Esophagus squamous epithelium (tissue), 5 donors: ENCODE measurements at regions of chr5 and their contacts with region 1.

Region 1: GRCh38 chr5:135724617-135725016 is 109.8 kb upstream of the SLC25A48 start:
- DNase-seq: no peak
- H3K4me3 ChIP-seq: no peak overlapping the region
- H3K27ac ChIP-seq: no peak overlapping the region
- H3K4me1 ChIP-seq: peaks cover 0 to 18% (median 4%) of the 10 kb centered on the region in 3 donors
- H3K27me3 ChIP-seq: no peaks in the 10 kb centered on the region
- CTCF ChIP-seq: no peak
- POLR2A ChIP-seq: no peak

Region 2: GRCh38 chr5:135271533-135272310 is 452.9 kb before region 1 on chr5:
- intact Hi-C with region 1: no loop called
- DNase-seq: no peak
- H3K4me3 ChIP-seq: no peak overlapping the region
- H3K27ac ChIP-seq: peak overlapping the region in 1 of 4 donors; percentile 25
- H3K4me1 ChIP-seq: peaks cover 7 to 52% (median 14%) of the 10 kb centered on the region in 3 donors
- H3K27me3 ChIP-seq: no peaks in the 10 kb centered on the region
- CTCF ChIP-seq: no peak
- POLR2A ChIP-seq: no peak

Region 3: GRCh38 chr5:135417083-135417482 is 307.5 kb before region 1 on chr5:
- intact Hi-C with region 1: no loop called
- DNase-seq: no peak
- H3K4me3 ChIP-seq: no peak overlapping the region
- H3K27ac ChIP-seq: no peak overlapping the region
- H3K4me1 ChIP-seq: no peaks in the 10 kb centered on the region
- H3K27me3 ChIP-seq: peaks cover 0 to 8% (median 0%) of the 10 kb centered on the region in 4 donors
- CTCF ChIP-seq: no peak
- POLR2A ChIP-seq: no peak

Region 4: DNA sequence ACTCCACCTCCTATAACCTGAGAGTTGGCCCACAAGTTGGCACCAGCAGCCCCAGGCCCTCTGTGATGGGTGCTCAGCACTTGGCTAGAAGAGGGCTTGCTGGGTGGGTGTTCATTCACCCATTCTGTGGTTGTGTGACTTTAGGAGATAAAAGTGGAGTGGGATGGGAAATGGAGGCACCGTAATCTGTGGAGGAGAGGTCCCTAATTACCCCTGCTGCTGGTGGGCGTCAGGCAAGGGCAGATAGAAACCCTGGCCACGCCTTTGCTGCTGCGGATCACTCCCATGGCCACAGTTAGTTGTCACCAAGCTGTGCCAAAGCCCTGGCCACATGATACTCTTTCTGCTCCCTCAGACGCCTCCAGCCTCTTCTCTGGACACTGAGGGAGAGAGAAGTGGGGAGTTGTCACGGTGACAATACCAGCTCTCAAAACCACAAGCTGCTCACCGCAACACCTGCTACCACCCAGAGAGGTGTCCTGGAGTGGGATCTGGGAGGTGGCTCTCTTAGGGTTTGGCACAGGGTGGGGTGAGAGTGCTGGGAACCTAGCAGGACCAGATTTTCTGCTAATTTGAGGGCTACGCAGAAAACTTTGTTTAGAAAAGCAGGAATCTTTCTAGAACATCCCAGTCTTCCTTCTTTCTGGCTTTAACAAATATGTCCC is 176.9 kb before region 1 on chr5:
- intact Hi-C with region 1: no loop called
- DNase-seq: no peak
- H3K4me3 ChIP-seq: no peak overlapping the region
- H3K27ac ChIP-seq: no peak overlapping the region
- H3K4me1 ChIP-seq: peaks cover 13 to 38% (median 15%) of the 10 kb centered on the region in 3 donors
- H3K27me3 ChIP-seq: peaks cover 0 to 95% (median 6%) of the 10 kb centered on the region in 4 donors
- CTCF ChIP-seq: no peak
- POLR2A ChIP-seq: no peak

Region 5: DNA sequence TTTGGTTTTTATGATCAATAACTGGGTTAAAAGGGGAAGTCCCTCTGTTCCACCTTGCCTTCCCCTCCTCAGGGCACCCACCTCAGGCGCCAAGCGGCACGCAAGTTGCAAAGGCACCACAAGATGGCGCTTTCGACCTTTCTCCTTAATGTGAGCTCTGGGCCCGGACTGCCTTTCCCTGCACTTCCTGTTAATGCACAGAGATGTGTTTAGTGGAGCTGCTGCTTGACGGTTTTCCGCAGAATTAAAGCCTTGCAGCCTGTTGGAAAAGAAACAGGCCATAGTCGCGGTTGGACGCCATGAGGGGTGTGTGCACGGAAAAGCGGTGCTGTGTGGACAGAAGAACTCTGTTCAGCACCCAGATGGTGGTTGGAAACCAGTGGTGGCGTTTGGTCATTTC is 163.8 kb before region 1 on chr5:
- intact Hi-C with region 1: loop called (anchors 5 kb)
- DNase-seq: no peak
- H3K4me3 ChIP-seq: no peak overlapping the region
- H3K27ac ChIP-seq: no peak overlapping the region
- H3K4me1 ChIP-seq: peaks cover 0 to 9% (median 0%) of the 10 kb centered on the region in 3 donors
- H3K27me3 ChIP-seq: peaks cover 0 to 40% (median 0%) of the 10 kb centered on the region in 4 donors
- CTCF ChIP-seq: peak; percentile 47 to 88 (median 78)
- POLR2A ChIP-seq: no peak